HEK293T (cell line): ENCODE measurements at regions of chr9 and their contacts with region 1.

Region 1: DNA sequence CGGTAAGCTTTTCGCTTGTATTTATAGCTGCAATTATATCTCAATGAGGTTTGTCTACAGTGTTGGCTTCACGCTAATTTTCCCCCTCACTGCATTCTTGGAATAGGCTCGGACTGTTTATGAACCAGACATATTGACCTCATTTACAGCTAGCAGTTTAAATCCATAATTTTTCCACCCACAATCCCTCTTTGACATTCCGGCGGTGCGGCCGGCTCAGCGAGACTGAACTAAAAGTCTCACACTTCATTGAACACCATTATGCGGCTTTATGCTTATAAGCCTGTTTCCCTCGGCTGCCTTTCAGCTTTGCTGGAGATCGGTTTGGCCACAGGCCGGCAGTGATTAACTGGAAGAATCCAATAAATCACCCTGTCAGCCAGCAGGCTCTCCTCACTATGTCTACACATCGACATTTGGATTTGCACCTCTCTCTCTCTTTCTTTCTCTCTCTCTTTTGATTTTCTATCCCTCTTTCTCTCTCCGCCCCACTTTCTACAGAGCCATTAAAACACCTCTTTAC is 315.0 kb upstream of the TLE4 start:
- DNase-seq: peak; percentile 98

Region 2: DNA sequence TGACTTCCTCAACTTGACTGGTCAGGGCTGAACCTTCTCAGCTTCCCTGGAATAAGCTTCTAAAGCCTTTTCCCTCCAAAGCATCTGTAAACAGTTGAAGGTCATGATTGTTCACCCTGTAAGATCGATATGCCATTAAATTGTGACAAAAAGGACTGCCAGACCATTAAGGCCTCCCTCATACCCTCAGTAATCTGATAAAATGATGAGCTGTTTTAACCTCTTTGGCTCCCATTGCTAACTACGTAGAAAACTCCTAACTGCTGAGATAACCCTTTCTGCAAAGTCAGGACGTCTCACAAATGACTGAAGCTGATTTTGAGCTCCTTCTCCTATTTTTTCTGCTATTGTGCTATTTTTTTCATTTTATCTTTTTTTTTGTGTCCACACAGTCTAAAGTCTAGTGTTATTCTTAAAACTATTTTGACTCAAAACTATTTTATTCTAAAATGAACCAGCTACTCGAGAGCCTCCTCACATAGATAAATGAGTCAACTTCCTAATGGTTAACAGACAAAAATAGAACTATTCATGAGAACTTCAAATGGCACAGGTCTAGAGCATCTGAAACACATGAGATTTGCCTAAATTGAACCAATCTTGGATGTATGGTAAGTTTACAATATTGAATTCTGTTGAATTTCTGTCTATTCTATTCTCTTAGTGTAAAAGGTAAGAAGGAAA is 80.6 kb before region 1 on chr9:
- CTCF ChIA-PET with region 1: interaction called, 13 read pairs
- POLR2A ChIA-PET with region 1: interaction called, 3 read pairs
- DNase-seq: no peak

Region 3: GRCh38 chr9:79189511-79189924 is 67.2 kb before region 1 on chr9:
- CTCF ChIA-PET with region 1: interaction called, 12 read pairs
- POLR2A ChIA-PET with region 1: no interaction called
- DNase-seq: no peak

Region 4: GRCh38 chr9:79208791-79209396 is 47.9 kb before region 1 on chr9:
- CTCF ChIA-PET with region 1: interaction called, 10 read pairs
- POLR2A ChIA-PET with region 1: no interaction called
- DNase-seq: no peak

Region 5: DNA sequence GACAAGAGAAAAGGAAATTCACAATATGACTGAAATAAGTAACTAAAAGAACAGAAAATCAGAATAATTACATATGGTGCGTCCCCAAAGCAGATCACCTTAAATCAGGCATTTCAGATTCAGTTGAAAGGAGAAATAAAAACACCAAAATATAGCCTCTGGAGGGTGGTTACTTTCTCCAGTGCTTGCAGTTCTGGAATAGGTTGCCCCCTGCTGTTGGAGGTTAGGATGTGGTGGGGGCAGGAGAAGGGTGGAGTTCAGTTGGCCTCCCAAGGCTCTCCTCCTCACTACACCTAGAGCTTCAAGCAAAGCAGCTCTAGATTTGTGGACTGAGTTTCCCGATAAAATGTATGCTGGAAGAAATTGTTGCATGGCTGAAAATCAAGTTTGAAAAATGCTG is 23.2 kb before region 1 on chr9:
- CTCF ChIA-PET with region 1: interaction called, 21 read pairs
- POLR2A ChIA-PET with region 1: no interaction called
- DNase-seq: peak; percentile 79

Region 6: DNA sequence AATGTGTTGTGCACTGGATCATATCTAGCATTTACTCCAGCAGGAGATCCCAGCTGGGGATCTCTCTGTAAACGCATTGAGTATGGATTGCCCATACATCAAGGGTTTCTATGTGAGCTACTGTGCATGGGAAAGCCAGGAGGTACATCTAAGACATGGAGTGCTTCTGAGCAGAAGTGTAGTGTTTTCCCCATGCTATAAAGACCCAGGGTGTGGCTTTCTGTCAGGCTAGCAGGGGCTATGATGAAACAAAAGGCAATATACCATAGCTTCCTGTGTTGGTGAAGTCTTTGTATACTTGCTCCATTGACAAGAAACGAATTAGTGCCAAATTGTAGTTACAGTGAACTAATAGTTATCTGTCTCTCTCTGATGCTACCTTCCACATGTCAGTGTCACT is 14.3 kb before region 1 on chr9:
- CTCF ChIA-PET with region 1: interaction called, 21 read pairs
- POLR2A ChIA-PET with region 1: interaction called, 3 read pairs
- DNase-seq: no peak

Region 7: GRCh38 chr9:79268806-79269205 is 12.1 kb after region 1 on chr9:
- CTCF ChIA-PET with region 1: interaction called, 20 read pairs
- POLR2A ChIA-PET with region 1: interaction called, 11 read pairs
- DNase-seq: no peak